ENCODE measurements at regions of chrX and their contacts with region 1.

Region 1: DNA sequence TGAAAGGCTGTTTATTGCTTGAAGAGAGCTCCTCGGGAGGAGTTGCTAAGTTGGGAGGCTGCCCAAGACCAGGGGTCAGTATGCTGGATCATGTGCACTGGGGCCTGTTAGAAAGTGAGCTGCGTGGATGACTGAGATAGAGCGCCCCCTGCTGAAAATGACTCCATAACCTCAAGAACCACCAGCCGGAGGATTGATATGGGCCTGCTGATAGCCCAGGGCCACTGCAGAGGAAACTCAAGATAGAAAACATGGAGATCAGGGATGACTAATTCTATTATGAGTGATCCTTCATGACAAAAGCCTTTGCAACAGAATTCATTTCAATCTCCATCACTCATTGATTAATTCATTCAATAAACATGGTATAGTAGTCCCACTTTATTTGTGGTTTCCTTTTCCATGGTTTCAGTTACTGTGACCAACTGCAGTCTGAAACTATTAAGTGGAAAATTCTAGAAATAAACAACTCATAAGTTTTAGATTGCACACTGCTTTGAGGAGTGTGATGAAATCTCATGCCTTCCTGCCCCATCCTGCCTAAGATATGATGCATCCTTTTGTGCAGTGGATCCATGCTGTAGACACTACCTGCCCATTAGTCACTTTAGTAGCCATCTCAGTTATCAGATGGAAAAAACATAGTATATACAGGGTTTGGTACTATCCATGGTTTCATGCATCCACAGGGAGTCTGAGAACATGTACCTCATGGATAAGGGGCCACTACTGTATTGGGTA is 126.7 kb upstream of the MBNL3 start:
- DNase-seq: peak in 5 of 6 donors; percentile 31 to 58 (median 41)
- ATAC-seq: peak; percentile 53 to 86 (median 80)
- H3K4me3 ChIP-seq: no peak overlapping the region
- H3K27ac ChIP-seq: no peak overlapping the region
- H3K4me1 ChIP-seq: no peaks in the 10 kb centered on the region
- H3K27me3 ChIP-seq: peaks cover 0 to 6% (median 0%) of the 10 kb centered on the region in 4 donors
- CTCF ChIP-seq: peak; percentile 26 to 37 (median 27)

Region 2: GRCh38 chrX:131841496-131842410 is 773.8 kb before region 1 on chrX:
- intact Hi-C with region 1: loop called in 1 of 3 experiments (anchors 10 kb)
- DNase-seq: peak in 2 of 6 donors; percentile 10 to 55
- ATAC-seq: peak; percentile 80 to 99 (median 96)
- H3K4me3 ChIP-seq: no peak overlapping the region
- H3K27ac ChIP-seq: no peak overlapping the region
- H3K4me1 ChIP-seq: no peaks in the 10 kb centered on the region
- H3K27me3 ChIP-seq: peaks cover 0 to 13% (median under 1%) of the 10 kb centered on the region in 4 donors
- CTCF ChIP-seq: peak; percentile 87 to 92 (median 91)

Region 3: GRCh38 chrX:132292793-132293192 is 322.8 kb before region 1 on chrX:
- intact Hi-C with region 1: loop called in 2 of 3 experiments (anchors 10 kb)
- DNase-seq: peak in 2 of 6 donors; percentile 26 to 33
- ATAC-seq: peak; percentile 58 to 91 (median 86)
- H3K4me3 ChIP-seq: no peak overlapping the region
- H3K27ac ChIP-seq: no peak overlapping the region
- H3K4me1 ChIP-seq: no peaks in the 10 kb centered on the region
- H3K27me3 ChIP-seq: peaks cover 0 to 4% (median 0%) of the 10 kb centered on the region in 4 donors
- CTCF ChIP-seq: peak; percentile 53 to 69 (median 66)

Region 4: DNA sequence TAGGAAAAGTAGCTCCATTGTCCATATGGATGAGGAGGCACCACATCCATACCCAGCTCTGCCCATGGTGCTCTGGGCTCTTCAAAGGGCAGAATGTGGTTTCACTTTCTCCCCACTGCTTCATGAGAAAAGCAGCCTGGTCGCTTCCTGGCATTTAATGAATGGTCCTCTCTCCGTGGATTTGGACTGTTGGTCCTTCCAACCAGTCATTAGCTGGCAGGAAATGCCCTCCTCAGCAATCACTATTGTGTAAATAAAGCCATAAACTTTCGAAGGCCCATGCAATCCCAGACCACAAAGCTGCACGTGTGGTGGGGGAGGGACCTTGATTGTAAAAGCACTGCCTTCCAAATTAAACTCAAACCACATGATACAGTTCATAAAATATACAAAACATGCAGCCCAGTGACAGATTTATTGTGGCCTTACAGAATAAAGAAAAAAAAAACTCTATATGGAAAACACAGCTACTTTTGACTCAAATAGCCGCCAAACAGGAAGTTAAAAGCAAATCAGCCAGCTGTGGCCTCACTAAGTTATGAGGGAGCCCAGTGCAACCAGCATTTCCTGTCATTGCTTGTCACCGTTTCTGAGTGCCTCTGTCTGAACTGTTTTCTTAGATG is 134.9 kb before region 1 on chrX:
- intact Hi-C with region 1: no loop called
- DNase-seq: peak in 3 of 6 donors; percentile 31 to 44 (median 41)
- ATAC-seq: peak; percentile 55 to 82 (median 76)
- H3K4me3 ChIP-seq: peak overlapping the region in 2 of 4 donors; percentile 15 to 22
- H3K27ac ChIP-seq: peak overlapping the region; percentile 24 to 83 (median 54)
- H3K4me1 ChIP-seq: peaks cover 0 to 26% (median 14%) of the 10 kb centered on the region in 3 donors
- H3K27me3 ChIP-seq: peaks cover 0 to 3% (median 0%) of the 10 kb centered on the region in 4 donors
- CTCF ChIP-seq: no peak

Region 5: GRCh38 chrX:133232331-133232730 is 616.8 kb after region 1 on chrX:
- intact Hi-C with region 1: no loop called
- DNase-seq: no peak
- ATAC-seq: no peak
- H3K4me3 ChIP-seq: no peak overlapping the region
- H3K27ac ChIP-seq: no peak overlapping the region
- H3K4me1 ChIP-seq: no peaks in the 10 kb centered on the region
- H3K27me3 ChIP-seq: peaks cover 0 to 3% (median 0%) of the 10 kb centered on the region in 4 donors
- CTCF ChIP-seq: no peak